MCF 10A (cell line): ENCODE measurements at regions of chr10 and their contacts with region 1.

Region 1: DNA sequence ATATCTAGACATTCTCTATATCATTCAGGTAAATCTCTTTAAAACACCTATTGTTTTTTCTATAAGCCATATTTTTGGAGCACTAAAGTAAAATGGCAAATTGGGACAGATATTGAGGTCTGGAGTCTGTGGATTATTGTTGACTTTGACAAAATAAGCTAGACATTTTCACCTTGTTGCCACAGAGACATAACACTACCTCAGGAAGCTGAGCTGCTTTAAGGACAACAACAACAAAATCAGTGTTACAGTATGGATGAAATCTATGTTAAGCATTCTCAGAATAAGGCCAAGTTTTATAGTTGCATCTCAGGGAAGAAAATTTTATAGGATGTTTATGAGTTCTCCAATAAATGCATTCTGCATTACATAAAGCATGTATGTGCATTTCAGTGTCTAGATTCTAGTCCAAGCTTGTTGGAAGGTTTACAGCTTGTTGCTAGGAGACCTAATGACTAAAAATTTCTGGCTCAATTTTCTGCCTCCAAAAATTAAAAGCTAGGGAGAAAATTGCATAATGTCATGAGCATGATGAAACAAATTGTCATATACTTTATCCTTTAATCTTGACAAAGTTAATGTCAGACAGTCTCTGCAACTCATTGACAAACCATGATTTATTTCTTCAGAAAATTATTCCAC is 18.3 kb downstream of the LIPM start:
- DNase-seq: peak; percentile 85
- H3K4me3 Mint-ChIP-seq: no peak overlapping the region
- H3K27ac Mint-ChIP-seq: peak overlapping the region; percentile 96
- H3K4me1 Mint-ChIP-seq: peaks cover 17% of the 10 kb centered on the region
- H3K27me3 Mint-ChIP-seq: no peaks in the 10 kb centered on the region
- CTCF ChIP-seq: no peak

Region 2: DNA sequence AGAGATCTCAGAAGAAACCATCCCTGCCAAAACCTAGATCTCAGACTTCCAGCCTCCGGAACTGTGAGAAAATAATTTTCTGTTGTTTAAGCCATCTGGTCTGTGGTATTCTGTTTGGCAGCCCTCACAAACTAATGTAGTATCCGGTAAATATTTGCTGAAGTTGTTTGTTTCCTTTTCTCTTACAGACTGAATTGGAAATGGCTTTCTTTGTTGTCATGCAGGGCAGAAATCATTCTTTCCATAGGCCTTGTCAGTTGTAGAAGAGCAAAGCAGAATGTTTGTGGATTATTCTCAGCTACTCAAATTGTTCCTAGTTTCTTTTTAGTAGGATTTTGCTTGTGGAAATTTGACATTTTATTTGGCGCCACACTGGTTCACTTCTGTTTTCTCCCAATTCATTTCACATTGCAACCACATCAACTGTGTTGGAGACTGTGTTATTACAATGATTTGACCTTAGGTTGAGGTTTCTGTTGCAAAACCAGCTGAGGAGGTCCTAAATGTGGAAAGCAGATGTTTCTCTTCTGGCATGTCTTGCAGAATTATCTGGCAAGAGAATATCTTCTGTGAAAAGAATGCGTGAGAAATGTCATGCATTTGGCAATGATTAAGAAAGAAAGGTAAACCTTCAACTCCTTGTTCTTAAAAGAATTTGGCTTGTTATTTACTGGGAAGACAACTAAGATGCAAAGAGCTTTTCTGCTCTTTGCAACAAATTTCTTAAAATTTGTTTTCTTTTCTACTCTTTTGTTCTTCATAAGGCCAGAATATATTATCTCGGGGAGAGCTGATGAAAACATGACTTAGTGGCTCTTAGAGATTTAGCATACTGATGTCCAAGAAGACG is 105.9 kb after region 1 on chr10:
- CTCF ChIA-PET with region 1: interaction called, 588 read pairs
- POLR2A ChIA-PET with region 1: interaction called, 11 read pairs
- intact Hi-C with region 1: no loop called
- DNase-seq: peak; percentile 76
- H3K4me3 Mint-ChIP-seq: no peak overlapping the region
- H3K27ac Mint-ChIP-seq: peak overlapping the region; percentile 69
- H3K4me1 Mint-ChIP-seq: peaks cover 23% of the 10 kb centered on the region
- H3K27me3 Mint-ChIP-seq: no peaks in the 10 kb centered on the region
- CTCF ChIP-seq: no peak